GM13977 (cell line): ENCODE measurements at regions of chr7 and their contacts with region 1.

Region 1: GRCh38 chr7:74429153-74429747 is 24.5 kb upstream of the GTF2IRD1 start:
- DNase-seq: no peak
- CTCF ChIP-seq: no peak

Region 2: GRCh38 chr7:74569501-74570075 is 140.3 kb after region 1 on chr7:
- in situ Hi-C with region 1: loop called (anchors 10 kb)
- DNase-seq: no peak
- CTCF ChIP-seq: no peak

Region 3: DNA sequence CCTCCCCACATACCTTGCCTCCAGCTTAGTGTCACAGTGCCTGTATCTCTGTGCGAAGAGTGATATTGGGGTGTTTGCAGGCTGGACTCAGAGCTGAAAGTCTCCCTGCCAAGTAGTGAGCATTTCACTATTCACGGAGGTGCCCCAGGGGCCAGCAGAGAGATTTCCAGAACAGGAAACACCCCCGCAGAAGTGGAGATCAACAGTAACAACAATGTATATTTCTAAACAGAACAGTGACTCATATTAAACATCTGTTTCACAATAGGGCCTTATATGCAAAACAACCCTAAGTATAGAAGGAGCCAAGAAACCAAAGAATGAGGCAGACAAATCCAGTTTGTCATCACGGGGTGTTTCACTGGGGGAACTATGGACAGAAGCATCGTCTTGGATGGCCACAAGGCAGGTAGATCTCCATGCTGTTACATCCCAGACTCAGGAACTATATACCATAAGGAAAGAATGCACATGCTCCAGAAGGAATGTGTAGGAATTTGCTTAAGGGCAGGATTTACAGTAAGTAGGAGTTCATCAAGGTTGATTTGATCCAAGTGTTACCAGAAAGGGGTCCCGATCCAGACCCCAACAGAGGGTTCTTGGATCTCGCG is 1413.7 kb after region 1 on chr7:
- in situ Hi-C with region 1: no loop called
- DNase-seq: peak; percentile 63
- CTCF ChIP-seq: no peak